GM10248 (cell line): ENCODE measurements at regions of chr9 and their contacts with region 1.

Region 1: GRCh38 chr9:82273121-82273520 is 284.5 kb downstream of the SPATA31D1 start:
- DNase-seq: no peak
- CTCF ChIP-seq: no peak

Region 2: DNA sequence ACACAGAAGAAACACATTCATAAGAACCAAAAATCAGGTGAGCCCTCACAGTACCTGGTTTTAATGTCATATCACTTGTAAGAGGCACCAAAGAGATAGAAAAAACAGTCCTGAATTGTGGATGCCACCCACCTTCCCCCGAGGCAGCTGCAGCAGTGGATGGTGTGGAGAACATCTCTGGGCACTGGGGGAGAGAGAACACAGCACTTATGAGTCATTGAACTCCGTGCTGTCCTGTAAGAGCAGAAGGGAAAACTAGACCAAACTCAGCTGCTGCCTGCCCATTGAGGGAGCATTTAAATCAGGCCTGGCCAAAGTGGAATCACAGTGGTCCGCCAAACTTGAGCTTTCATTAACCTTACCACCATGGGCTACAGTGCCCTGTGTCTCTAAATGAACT is 11.6 kb after region 1 on chr9:
- CTCF ChIA-PET with region 1: interaction called, 12 read pairs
- POLR2A ChIA-PET with region 1: no interaction called
- DNase-seq: no peak
- CTCF ChIP-seq: no peak